ENCODE measurements at regions of chr1 and their contacts with region 1.

Region 1: DNA sequence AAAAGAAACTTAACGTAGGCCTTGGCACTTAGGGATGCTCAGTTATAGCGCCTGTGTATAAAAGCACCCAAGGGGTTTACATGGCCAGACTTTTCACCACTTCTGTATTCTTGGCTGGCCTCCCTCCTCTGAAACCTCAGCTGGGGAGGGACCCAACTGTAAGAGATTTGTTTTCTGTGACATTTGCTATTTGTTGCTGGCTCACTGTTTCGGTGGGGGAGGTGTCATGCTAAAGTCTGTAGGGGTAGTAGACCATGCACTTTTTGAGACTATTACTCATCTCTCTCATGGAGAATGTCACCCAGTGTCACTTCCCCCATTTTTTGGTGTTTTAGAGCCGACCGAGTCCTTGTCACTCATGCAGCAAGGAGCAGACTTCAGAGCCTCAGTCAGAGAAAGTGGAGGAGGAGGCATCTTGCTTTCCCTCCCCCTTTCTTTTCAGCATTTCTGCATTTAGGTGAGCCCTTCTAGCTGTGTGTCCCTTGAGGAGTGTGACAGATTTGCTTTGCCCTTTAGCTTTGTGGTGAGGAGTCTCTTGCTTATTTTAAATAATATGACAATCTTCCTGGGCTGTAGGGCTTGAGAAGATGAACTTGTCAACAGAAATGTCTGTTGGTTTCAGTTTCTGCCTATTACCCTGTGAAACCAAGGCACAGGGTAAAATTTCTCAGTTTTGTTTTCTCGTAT is 160.1 kb downstream of the FASLG start:
- DNase-seq: peak; percentile 45
- ATAC-seq: peak; percentile 84
- H3K4me3 Mint-ChIP-seq: peak overlapping the region; percentile 77
- H3K27ac Mint-ChIP-seq: peak overlapping the region; percentile 96
- H3K4me1 Mint-ChIP-seq: peaks cover 47% of the 10 kb centered on the region
- H3K27me3 Mint-ChIP-seq: no peaks in the 10 kb centered on the region
- CTCF ChIP-seq: no peak

Region 2: DNA sequence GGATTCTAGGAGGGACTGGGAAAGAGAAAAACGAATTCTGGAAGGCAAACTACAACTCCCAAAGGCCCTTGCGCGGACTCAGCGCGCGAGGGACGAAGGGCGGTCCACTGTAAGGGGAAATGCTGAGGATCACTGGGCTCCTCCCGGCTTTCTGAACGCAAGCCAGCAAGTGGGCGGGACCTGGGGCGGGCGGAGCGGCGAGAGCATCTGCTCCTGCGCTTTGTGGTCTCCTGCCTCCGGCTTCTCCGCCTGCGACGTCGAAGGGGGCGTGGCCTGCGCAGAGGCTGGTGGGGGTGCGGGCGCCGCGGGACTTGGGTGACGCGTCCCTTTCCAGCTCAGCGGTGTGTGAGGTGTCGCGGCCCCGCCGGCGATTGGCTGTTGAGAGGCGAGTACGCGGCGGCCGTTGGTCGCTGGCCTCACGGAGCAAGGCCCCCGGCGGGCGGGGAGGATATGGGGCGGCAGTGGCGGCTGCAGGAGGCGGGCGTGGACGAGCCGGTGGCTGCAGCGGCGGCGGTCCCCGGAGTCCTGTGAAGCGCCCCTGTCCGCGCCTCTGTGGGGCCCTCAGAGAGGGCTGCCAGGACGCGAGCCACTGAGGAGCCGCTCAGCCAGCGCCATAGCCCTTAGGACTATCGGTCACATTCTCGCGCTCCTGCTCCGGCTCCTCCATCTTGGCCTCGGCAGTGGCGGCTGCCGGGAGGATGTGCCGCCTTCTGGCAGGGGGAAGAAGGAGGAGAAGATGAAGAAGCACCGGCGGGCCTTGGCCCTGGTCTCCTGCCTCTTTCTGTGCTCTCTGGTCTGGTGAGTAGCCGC is 286.1 kb before region 1 on chr1 and contains the start of gene SUCO:
- CTCF ChIA-PET with region 1: no interaction called
- POLR2A ChIA-PET with region 1: interaction called, 4 read pairs
- intact Hi-C with region 1: loop called (anchors 2 kb)
- DNase-seq: peak; percentile 99
- ATAC-seq: peak; percentile 82
- H3K4me3 Mint-ChIP-seq: peak within 1 kb of the TSS; percentile 98
- H3K27ac Mint-ChIP-seq: peak within 1 kb of the TSS; percentile 99
- H3K4me1 Mint-ChIP-seq: peaks cover 48% of the 10 kb centered on the region
- H3K27me3 Mint-ChIP-seq: peaks cover 4% of the 10 kb centered on the region
- CTCF ChIP-seq: no peak
- total RNA-seq, gene SUCO: 35.2 and 47.1 TPM in 2 replicates

Region 3: GRCh38 chr1:172895050-172895460 is 76.1 kb after region 1 on chr1:
- CTCF ChIA-PET with region 1: interaction called, 3 read pairs
- POLR2A ChIA-PET with region 1: interaction called, 13 read pairs
- intact Hi-C with region 1: loop called (anchors 1 kb)
- DNase-seq: no peak
- ATAC-seq: peak; percentile 68
- H3K4me3 Mint-ChIP-seq: peak overlapping the region; percentile 70
- H3K27ac Mint-ChIP-seq: peak overlapping the region; percentile 86
- H3K4me1 Mint-ChIP-seq: peaks cover 40% of the 10 kb centered on the region
- H3K27me3 Mint-ChIP-seq: no peaks in the 10 kb centered on the region
- CTCF ChIP-seq: no peak

Region 4: GRCh38 chr1:173195596-173196088 is 376.7 kb after region 1 on chr1:
- CTCF ChIA-PET with region 1: interaction called, 6 read pairs
- POLR2A ChIA-PET with region 1: interaction called, 6 read pairs
- intact Hi-C with region 1: loop called (anchors 1 kb)
- DNase-seq: peak; percentile 31
- ATAC-seq: peak; percentile 93
- H3K4me3 Mint-ChIP-seq: peak overlapping the region; percentile 61
- H3K27ac Mint-ChIP-seq: peak overlapping the region; percentile 88
- H3K4me1 Mint-ChIP-seq: peaks cover 36% of the 10 kb centered on the region
- H3K27me3 Mint-ChIP-seq: no peaks in the 10 kb centered on the region
- CTCF ChIP-seq: no peak

Region 5: GRCh38 chr1:173420330-173420806 is 601.4 kb after region 1 on chr1:
- CTCF ChIA-PET with region 1: interaction called, 4 read pairs
- POLR2A ChIA-PET with region 1: interaction called, 48 read pairs
- intact Hi-C with region 1: loop called (anchors 1 kb)
- DNase-seq: no peak
- ATAC-seq: peak; percentile 21
- H3K4me3 Mint-ChIP-seq: peak overlapping the region; percentile 60
- H3K27ac Mint-ChIP-seq: peak overlapping the region; percentile 95
- H3K4me1 Mint-ChIP-seq: peaks cover 63% of the 10 kb centered on the region
- H3K27me3 Mint-ChIP-seq: no peaks in the 10 kb centered on the region
- CTCF ChIP-seq: no peak

Region 6: DNA sequence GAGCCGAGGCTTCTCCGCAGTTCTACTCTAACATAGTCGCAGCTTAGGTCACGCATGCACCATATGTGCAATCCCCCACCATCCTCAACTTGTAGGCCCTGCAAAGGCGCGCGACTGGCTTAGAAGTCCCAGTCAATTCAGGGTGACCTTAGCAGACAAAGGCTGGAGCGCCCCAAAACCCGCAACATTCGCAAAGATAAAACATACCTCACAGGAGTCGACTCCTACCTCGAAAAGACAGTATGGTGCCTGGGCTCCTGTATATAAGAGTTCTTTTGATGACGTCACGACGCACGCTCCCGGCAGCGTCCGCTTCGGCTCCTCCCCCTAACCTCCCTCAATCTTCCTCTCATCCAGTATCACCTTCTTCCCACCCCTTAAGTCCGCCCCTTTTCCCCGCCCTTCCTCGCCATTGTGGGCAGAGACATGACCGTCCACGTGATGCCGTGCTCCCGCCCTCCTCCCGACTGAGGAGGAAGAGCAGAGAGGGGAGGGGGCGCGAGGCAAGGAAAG is 1048.8 kb after region 1 on chr1 and contains the start of gene GAS5:
- CTCF ChIA-PET with region 1: no interaction called
- POLR2A ChIA-PET with region 1: interaction called, 19 read pairs
- intact Hi-C with region 1: no loop called
- DNase-seq: peak; percentile 95
- ATAC-seq: peak; percentile 80
- H3K4me3 Mint-ChIP-seq: peak within 1 kb of the TSS; percentile 97
- H3K27ac Mint-ChIP-seq: peak within 1 kb of the TSS; percentile 97
- H3K4me1 Mint-ChIP-seq: peaks cover 79% of the 10 kb centered on the region
- H3K27me3 Mint-ChIP-seq: no peaks in the 10 kb centered on the region
- CTCF ChIP-seq: no peak
- total RNA-seq, gene GAS5: 701 and 722 TPM in 2 replicates